ENCODE measurements at regions of chr7 and their contacts with region 1.

Region 1: DNA sequence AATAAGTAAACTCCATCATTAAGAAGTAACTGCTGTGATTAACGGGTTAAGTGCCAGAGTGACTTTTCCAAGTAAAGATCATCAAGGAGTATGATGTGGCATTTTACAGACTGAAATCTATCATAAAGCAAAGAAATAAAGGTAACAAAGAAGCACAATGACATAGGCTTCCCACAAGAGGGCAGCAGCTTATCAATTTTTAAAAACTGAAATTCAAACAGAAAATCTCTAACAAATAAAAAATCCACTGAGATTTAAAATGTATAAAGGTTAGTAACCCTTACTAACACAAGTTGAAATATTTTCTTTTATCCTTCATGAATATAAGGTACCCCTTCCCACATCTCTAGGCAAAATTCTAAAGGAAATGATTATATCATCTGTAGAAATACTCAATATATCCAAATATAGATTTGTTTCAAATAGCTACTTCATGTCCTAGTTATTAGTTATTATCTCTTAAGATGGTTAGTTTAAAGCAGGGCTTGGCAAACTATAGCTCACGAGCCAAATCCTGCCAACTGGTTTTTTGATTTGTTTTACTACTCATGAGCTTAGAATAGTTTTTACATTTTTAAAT is 29.2 kb downstream of the FAM3C start:
- DNase-seq: no peak
- H3K4me3 ChIP-seq: no peak overlapping the region
- H3K27ac ChIP-seq: no peak overlapping the region
- H3K4me1 ChIP-seq: no peaks in the 10 kb centered on the region
- H3K27me3 ChIP-seq: no peaks in the 10 kb centered on the region
- CTCF ChIP-seq: peak; percentile 56 to 77 (median 68)

Region 2: GRCh38 chr7:121395961-121396757 is 29.2 kb after region 1 on chr7 and contains the start of gene FAM3C:
- intact Hi-C with region 1: loop called (anchors 2 kb)
- DNase-seq: peak; percentile 75 to 95
- H3K4me3 ChIP-seq: peak within 1 kb of the TSS; percentile 93 to 100
- H3K27ac ChIP-seq: peak within 1 kb of the TSS; percentile 85 to 91
- H3K4me1 ChIP-seq: no peaks in the 10 kb centered on the region
- H3K27me3 ChIP-seq: no peaks in the 10 kb centered on the region
- CTCF ChIP-seq: peak; percentile 83 to 96 (median 92)
- total RNA-seq, gene FAM3C: 27.6 TPM

Region 3: GRCh38 chr7:121547544-121548092 is 180.7 kb after region 1 on chr7:
- intact Hi-C with region 1: loop called (anchors 1 kb)
- DNase-seq: no peak
- H3K4me3 ChIP-seq: no peak overlapping the region
- H3K27ac ChIP-seq: no peak overlapping the region
- H3K4me1 ChIP-seq: no peaks in the 10 kb centered on the region
- H3K27me3 ChIP-seq: no peaks in the 10 kb centered on the region
- CTCF ChIP-seq: peak; percentile 66 to 75 (median 67)

Region 4: GRCh38 chr7:121994625-121995410 is 627.9 kb after region 1 on chr7:
- intact Hi-C with region 1: loop called (anchors 2 kb)
- DNase-seq: peak in 1 of 2 donors; percentile 63
- H3K4me3 ChIP-seq: no peak overlapping the region
- H3K27ac ChIP-seq: no peak overlapping the region
- H3K4me1 ChIP-seq: no peaks in the 10 kb centered on the region
- H3K27me3 ChIP-seq: no peaks in the 10 kb centered on the region
- CTCF ChIP-seq: peak in 2 of 3 experiments; percentile 38 to 52

Measured in ascending aorta (tissue), 2 donors.